Activated T-helper 1 cell treated with anti-CD3 and anti-CD28 coated beads, Interleukin-12 subunit alpha, Interleukin-12 subunit beta, Interleukin-2, Interleukin-4 antibody, amounts not matched to agents 30 ng/mL and 10 ng/mL and 1 ng/mL, durations not matched to agents 14 hours and 24 hours and 36 hours (primary cell): ENCODE measurements at regions of chr7 and their contacts with region 1.

Region 1: DNA sequence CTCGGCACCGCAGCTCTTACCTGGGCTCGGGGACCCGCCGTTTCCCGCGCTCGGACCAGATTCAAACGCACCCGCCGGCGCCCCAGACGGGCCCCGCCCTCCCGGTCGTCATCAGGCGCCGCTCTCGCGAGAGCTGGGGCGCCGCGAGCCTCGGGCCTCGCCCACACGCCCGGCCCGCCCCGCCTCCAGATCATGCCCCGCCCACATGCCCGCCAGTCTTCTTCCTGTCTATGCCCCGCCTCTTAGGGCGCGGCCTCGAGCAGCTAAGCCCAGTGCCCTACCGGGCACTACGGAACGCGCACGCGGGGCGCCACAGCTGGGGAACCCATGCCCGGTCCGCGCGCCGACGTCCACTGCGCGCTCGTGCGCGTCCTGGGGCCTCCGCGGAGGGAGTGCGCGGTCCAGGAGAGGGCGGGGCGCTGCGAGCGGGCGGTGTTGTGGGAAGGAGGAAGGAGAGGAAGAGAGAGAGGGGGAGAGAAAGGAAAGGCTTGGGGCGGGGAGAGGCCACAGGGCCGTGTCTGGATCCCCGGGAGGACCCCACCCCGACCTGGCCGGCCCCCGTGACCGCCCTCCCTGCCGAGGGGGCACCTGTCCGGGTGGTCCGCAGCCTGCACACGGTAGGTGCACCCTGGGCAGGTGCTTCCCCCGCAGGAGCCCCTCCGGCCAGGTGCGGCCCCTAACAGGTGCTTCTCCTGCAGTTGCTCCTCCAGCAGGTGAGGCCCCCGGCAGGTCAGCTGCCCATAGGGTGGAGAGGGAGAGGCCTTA is at the start of gene NCAPG2:
- DNase-seq: peak; percentile 94
- H3K4me3 Mint-ChIP-seq: peak within 1 kb of the TSS; percentile 87
- H3K27ac Mint-ChIP-seq: peak within 1 kb of the TSS; percentile 87
- H3K4me1 Mint-ChIP-seq: peaks cover 52% of the 10 kb centered on the region
- H3K27me3 Mint-ChIP-seq: peaks cover 2% of the 10 kb centered on the region
- total RNA-seq, gene NCAPG2: 76.5 and 86.9 TPM in 2 replicates

Region 2: DNA sequence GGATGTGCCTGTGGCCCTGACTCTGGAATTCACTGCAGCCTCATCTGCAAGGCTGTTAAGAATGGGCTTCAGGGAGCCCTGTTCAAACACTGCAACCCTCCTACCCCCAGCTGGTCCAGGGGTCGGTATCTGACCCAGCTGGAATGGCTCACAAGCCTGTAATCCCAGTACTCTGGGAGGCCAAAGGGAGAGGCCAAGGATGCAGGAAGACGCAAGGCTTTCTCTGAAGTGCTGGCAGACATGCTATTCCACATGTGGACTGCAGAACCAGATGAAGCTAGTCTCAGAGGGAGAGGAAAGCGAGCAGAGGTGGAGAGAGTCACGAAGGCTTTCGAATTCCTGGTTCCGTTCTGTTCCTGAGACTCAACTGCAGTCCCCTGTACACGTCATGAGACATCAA is 79.4 kb after region 1 on chr7:
- intact Hi-C with region 1: no loop called
- DNase-seq: no peak
- H3K4me3 Mint-ChIP-seq: no peak overlapping the region
- H3K27ac Mint-ChIP-seq: no peak overlapping the region
- H3K4me1 Mint-ChIP-seq: peaks cover 5% of the 10 kb centered on the region
- H3K27me3 Mint-ChIP-seq: no peaks in the 10 kb centered on the region

Region 3: GRCh38 chr7:158856883-158857668 is 152.2 kb after region 1 on chr7:
- intact Hi-C with region 1: loop called (anchors 1 kb)
- DNase-seq: no peak
- H3K4me3 Mint-ChIP-seq: peak overlapping the region; percentile 97
- H3K27ac Mint-ChIP-seq: no peak overlapping the region
- H3K4me1 Mint-ChIP-seq: peaks cover 37% of the 10 kb centered on the region
- H3K27me3 Mint-ChIP-seq: peaks cover 2% of the 10 kb centered on the region